Endothelial cell of umbilical vein (primary cell): ENCODE measurements at regions of chr12 and their contacts with region 1.

Region 1: DNA sequence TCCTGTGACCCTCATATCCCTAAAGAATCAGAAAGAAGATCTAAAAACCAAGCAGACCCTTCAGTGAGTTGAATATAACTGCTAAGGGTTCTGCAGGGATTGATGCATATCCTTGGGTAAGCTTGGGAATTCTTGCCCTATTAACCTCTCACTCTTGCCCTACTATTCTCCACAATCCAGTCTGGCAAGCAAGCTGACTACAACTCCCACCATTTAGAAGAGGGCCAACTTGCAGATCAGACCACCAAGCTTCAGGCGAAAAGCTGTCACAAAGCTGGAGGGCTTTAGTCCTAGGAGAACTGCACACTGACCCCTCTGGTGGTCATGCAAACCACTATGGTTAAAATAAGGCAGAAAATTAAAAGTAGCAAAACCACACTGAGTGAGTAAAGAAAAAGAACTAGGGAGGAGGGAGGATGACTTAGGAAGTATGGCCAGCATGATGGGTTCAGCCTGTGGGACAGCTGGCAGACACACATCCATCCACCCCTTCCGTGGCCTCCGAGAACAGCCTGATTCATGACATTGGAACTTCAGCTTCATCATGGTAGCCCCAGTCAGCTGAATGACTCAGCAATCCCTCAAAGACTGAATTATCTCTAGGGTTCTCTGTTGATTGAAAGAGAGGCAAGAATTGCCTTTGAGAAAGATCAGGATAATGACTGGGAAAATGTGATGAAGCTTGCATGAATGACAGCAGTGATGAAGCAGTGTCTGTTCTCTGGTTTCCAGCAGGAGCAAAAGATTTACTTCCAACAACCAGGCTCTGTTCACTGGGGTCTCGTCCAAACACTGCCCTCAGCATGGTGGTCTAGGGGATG is 24.5 kb downstream of the PITPNM2 start:
- DNase-seq: peak; percentile 75
- H3K4me3 ChIP-seq: no peak overlapping the region
- H3K27ac ChIP-seq: peak overlapping the region; percentile 64
- H3K4me1 ChIP-seq: peaks cover 13% of the 10 kb centered on the region
- H3K27me3 ChIP-seq: no peaks in the 10 kb centered on the region
- CTCF ChIP-seq: peak in 1 of 2 donors; percentile 21
- POLR2A ChIP-seq: no peak

Region 2: DNA sequence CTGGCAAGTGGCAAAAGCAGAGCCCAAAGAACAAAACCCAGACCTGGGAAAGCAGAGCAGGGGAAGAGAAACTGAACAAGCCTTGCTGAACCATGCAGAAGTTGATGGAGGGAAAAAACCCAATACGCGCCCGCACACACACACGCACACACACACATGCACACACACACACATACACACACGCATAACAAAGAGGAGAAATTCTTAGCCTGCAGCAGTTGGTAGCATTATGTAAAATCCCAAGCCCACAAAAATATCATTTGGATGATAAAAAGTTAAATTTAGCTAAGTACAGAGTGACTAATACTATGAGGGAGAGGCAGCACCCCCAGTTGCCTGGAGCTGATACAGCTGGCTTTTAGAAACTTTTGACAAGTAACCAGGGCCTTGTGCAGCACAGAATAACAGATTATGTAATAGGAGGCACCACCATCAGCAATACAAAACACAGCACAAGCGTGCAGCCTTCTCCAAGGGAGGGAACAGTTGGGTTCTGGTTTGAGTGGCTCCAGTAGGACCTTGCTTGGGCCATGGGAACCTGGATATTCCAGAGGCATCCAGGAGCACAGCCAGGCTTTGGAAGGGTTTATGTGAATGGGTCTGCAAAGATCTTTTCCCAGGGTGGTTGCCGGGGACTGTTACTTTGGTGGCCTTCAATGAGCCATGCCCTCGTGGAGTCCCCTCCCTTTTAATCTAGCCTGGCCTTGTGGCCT is 10.8 kb before region 1 on chr12:
- CTCF ChIA-PET with region 1: interaction called, 11 read pairs
- POLR2A ChIA-PET with region 1: interaction called, 3 read pairs
- dilution Hi-C with region 1: no loop called
- intact Hi-C with region 1: no loop called
- DNase-seq: no peak
- H3K4me3 ChIP-seq: no peak overlapping the region
- H3K27ac ChIP-seq: no peak overlapping the region
- H3K4me1 ChIP-seq: peaks cover 14% of the 10 kb centered on the region
- H3K27me3 ChIP-seq: no peaks in the 10 kb centered on the region
- CTCF ChIP-seq: no peak
- POLR2A ChIP-seq: no peak